Left colon (tissue), 2 donors: ENCODE measurements at regions of chr19 and their contacts with region 1.

Region 1: DNA sequence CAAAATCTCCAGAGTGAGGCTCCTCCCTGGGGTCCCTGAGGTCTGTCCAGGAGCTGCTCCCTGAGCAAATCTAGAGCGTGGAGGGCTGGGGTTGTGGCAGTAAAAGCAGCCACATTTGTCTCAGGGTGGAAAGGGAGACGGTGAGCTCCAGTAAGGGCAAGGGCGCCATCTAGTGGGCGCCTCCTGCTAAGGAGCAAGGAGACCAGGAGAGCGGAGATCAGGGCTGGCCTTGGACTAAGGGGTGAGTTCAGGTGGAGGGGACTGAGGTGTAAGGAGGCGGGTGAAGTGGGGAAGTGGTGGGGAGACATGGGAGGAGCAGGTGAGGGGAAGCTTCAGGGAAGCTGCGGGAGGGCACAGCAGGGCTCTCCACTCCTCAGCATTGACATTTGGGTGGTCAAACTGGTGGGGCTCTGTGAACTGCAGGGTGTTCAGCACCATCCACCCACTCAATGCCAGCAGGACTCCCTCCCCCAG is 5.3 kb upstream of the CEACAM21 start:
- DNase-seq: peak; percentile 67 to 90
- ATAC-seq: peak; percentile 90

Region 2: DNA sequence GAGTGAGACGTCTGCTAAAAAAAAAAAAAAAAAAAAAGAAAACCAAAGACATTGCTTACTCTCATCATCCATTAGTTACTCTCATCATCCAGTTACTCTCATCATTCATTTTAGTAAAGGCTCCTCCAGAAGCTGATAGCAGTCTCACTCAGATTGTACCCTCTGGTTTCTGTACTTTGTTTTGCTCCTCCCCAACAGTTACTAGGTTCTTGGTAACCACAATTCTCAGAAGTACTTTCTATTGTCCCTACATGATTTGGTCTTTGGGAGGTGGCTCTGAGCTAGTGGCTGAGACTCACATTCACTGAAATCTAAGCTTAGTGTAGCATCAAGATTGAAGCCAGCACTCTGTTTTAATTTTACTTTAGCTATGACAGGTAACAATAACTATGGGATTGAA is 113.4 kb before region 1 on chr19:
- intact Hi-C with region 1: loop called (anchors 5 to 10 kb)
- DNase-seq: no peak
- ATAC-seq: no peak

Region 3: DNA sequence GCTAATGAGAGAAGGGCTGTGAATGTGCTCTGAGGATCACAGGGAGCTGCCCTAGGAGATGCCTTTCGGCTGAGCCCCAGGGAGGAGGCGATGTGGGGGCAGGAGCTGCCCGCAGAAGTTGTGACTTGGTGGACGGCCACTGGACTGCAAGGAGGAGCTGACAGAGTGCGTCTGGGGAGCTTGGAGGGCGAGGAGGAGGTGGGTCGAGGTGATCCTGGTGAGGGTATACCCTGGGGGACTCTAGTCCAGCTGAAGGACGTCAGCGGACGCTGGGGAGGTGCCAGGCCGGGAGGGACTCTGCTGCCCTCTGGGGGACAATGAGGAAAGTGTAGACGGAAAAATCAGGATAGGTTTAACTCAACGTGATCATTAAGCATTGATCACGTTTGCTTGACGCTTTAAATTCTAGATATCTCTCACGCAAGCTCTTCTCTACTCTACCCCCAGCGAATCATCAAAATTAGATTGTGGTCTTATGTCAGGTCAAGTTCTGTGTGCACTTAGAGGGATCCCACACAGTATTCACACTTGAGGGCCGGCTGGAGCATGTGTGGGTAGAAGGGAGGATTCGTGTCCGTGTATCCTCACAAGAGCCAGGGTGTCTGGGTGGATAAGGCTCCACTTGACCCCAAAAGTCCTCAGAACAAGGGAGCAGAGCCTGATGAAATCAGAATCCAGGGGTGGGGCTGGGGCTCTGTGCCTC is 120.7 kb after region 1 on chr19:
- intact Hi-C with region 1: no loop called
- DNase-seq: peak; percentile 27 to 49
- ATAC-seq: peak; percentile 56